H1 (cell line): ENCODE measurements at regions of chr9 and their contacts with region 1.

Region 1: GRCh38 chr9:114681594-114682332 is at the start of gene TEX48:
- DNase-seq: peak; percentile 43 to 84
- H3K4me3 ChIP-seq: no peak within 1 kb of the TSS
- H3K27ac ChIP-seq: no peak within 1 kb of the TSS
- H3K4me1 ChIP-seq: no peaks in the 10 kb centered on the region
- H3K27me3 ChIP-seq: no peaks in the 10 kb centered on the region; a peak in 2 of 7 replicates
- CTCF ChIP-seq: peak; percentile 86 to 91 (median 90)
- EP300 ChIP-seq: no peak
- POLR2A ChIP-seq: no peak
- RAD21 ChIP-seq: peak; percentile 85 to 94
- total RNA-seq, gene TEX48: not detected in 2 replicates

Region 2: GRCh38 chr9:114224247-114224610 is 457.5 kb before region 1 on chr9:
- CTCF ChIA-PET with region 1: no interaction called
- POLR2A ChIA-PET with region 1: no interaction called
- DNase-seq: no peak
- H3K4me3 ChIP-seq: no peak overlapping the region
- H3K27ac ChIP-seq: no peak overlapping the region
- H3K4me1 ChIP-seq: peaks cover 0 to 10% (median 1%) of the 10 kb centered on the region in 4 experiments; a peak in 3 of 7 replicates
- H3K27me3 ChIP-seq: no peaks in the 10 kb centered on the region
- CTCF ChIP-seq: no peak
- EP300 ChIP-seq: no peak
- POLR2A ChIP-seq: no peak
- RAD21 ChIP-seq: no peak

Region 3: DNA sequence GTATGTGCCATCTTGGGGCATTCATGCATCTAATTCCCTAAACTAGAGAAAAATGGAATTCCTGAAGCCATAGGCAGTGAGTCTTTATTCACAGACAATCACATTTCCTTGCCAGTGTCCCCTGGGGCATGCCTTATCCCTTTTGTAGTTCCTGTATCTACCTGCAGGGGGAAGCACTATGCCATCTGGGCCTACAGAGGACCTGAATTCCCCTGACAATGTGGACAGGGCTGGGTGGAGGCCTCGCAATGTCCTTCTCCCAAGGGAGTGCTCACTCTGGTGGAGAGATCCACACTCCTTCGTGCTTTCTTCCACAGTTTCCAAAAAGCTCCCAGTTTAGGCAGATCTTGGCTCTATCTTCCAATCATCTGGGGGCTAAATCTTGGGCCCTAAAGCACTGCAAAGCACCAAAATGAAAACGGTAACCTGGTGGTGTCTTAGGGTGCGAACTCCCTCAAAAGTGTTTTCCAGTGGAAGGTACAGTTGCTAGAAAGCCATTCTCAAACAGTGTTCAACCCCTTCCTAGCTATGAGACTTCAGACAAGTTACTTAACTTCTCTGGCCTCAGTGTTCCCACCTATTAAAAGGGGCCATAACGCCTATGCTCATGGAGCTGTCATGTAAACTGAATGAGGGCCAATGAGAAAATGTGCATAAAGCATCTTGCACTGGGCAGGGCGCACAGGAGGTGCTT is 194.0 kb before region 1 on chr9:
- CTCF ChIA-PET with region 1: interaction called, 10 read pairs
- POLR2A ChIA-PET with region 1: no interaction called
- DNase-seq: peak in 1 of 2 experiments; percentile 78
- H3K4me3 ChIP-seq: no peak overlapping the region
- H3K27ac ChIP-seq: no peak overlapping the region
- H3K4me1 ChIP-seq: peaks cover 0 to 3% (median 0%) of the 10 kb centered on the region in 4 experiments; a peak in 3 of 7 replicates
- H3K27me3 ChIP-seq: no peaks in the 10 kb centered on the region
- CTCF ChIP-seq: peak; percentile 70 to 86 (median 81)
- EP300 ChIP-seq: no peak
- POLR2A ChIP-seq: no peak
- RAD21 ChIP-seq: peak; percentile 83 to 86

Region 4: DNA sequence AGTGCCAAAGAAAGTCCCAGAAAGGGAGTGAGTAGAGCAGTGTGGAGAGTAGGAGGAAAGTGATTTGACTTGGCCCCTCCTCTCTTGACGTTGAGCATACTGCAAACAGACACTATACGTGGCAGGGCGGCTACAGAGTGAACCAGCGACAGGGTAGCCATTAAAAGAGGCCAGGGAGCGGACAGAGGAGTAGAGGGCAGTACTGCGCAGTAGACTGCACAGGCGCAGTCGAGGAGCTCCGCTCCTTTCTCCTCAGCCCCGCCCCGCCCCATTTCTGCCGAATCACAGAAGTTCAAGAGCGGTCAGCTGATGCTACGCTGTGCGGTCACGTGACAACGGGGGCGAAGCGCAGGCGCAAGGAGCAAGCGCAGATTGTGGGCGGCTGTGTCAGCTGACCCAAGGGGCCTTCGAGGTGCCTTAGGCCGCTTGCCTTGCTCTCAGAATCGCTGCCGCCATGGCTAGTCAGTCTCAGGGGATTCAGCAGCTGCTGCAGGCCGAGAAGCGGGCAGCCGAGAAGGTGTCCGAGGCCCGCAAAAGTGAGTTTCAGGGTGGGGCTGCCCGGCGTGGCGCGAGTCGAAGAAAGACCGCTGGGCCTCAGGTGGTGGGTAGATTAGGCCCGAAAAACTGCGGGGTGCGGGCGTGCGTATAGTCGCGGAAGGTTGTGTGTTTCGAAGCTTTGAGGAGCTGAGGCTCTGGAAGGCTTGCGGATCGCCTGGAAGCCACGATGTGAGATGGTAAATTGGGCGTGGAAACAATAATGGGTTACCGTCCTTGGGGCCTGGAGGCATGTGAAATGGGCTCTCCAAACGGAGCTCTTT is 94.2 kb before region 1 on chr9 and contains the start of gene ATP6V1G1:
- CTCF ChIA-PET with region 1: no interaction called
- POLR2A ChIA-PET with region 1: no interaction called
- DNase-seq: peak; percentile 96 to 97
- H3K4me3 ChIP-seq: peak within 1 kb of the TSS; percentile 75 to 97 (median 89)
- H3K27ac ChIP-seq: peak within 1 kb of the TSS; percentile 82
- H3K4me1 ChIP-seq: peaks cover 6 to 16% (median 7%) of the 10 kb centered on the region in 4 experiments
- H3K27me3 ChIP-seq: no peaks in the 10 kb centered on the region
- CTCF ChIP-seq: no peak
- EP300 ChIP-seq: peak; percentile 5 to 46; a peak in 2 of 3 replicates
- POLR2A ChIP-seq: peak; percentile 84 to 90
- RAD21 ChIP-seq: peak in 1 of 2 experiments; percentile 10; a peak in 1 of 4 replicates
- total RNA-seq, gene ATP6V1G1: 112 and 114 TPM in 2 replicates

Region 5: GRCh38 chr9:114603248-114603647 is 78.5 kb before region 1 on chr9:
- CTCF ChIA-PET with region 1: no interaction called
- POLR2A ChIA-PET with region 1: no interaction called
- DNase-seq: no peak
- H3K4me3 ChIP-seq: no peak overlapping the region
- H3K27ac ChIP-seq: no peak overlapping the region
- H3K4me1 ChIP-seq: no peaks in the 10 kb centered on the region
- H3K27me3 ChIP-seq: no peaks in the 10 kb centered on the region
- CTCF ChIP-seq: no peak
- EP300 ChIP-seq: no peak
- POLR2A ChIP-seq: no peak
- RAD21 ChIP-seq: no peak

Region 6: GRCh38 chr9:114709636-114710035 is 27.9 kb after region 1 on chr9:
- CTCF ChIA-PET with region 1: interaction called, 15 read pairs
- POLR2A ChIA-PET with region 1: interaction called, 3 read pairs
- DNase-seq: no peak
- H3K4me3 ChIP-seq: no peak overlapping the region
- H3K27ac ChIP-seq: no peak overlapping the region
- H3K4me1 ChIP-seq: no peaks in the 10 kb centered on the region
- H3K27me3 ChIP-seq: 0 out of 7 replicates have a peak, but pooled peaks cover 0 to 2% (median 0%) of the 10 kb centered on the region in 4 experiments
- CTCF ChIP-seq: no peak
- EP300 ChIP-seq: no peak
- POLR2A ChIP-seq: no peak
- RAD21 ChIP-seq: no peak

Region 7: GRCh38 chr9:114738581-114739316 is 57.0 kb after region 1 on chr9:
- CTCF ChIA-PET with region 1: interaction called, 33 read pairs
- POLR2A ChIA-PET with region 1: no interaction called
- DNase-seq: peak; percentile 46 to 78
- H3K4me3 ChIP-seq: no peak overlapping the region
- H3K27ac ChIP-seq: no peak overlapping the region
- H3K4me1 ChIP-seq: no peaks in the 10 kb centered on the region
- H3K27me3 ChIP-seq: no peaks in the 10 kb centered on the region
- CTCF ChIP-seq: peak; percentile 62 to 92 (median 87)
- EP300 ChIP-seq: no peak
- POLR2A ChIP-seq: no peak
- RAD21 ChIP-seq: peak; percentile 98 to 99

Region 8: DNA sequence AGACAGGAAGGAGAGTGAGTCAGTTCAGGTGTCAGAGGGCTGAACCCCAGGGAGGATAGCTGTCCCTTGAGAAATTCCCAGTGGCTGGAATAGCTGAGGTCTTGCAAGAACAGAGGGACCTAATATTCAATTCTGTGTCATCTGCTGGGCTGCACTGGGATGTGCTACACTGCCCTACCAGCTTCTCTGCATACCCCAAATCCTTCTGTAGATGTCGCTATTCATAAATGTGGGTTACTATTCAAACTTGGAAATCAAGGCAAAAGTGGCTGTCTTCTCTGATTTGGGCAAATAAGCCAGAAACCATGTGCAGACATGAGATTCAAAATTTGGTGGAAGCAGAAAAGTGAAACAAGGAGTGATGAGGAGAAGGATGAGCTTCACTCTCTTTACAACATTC is 232.4 kb after region 1 on chr9:
- CTCF ChIA-PET with region 1: interaction called, 171 read pairs
- POLR2A ChIA-PET with region 1: no interaction called
- DNase-seq: no peak
- H3K4me3 ChIP-seq: no peak overlapping the region
- H3K27ac ChIP-seq: no peak overlapping the region
- H3K4me1 ChIP-seq: no peaks in the 10 kb centered on the region
- H3K27me3 ChIP-seq: peaks cover 2 to 34% (median 19%) of the 10 kb centered on the region in 4 experiments
- CTCF ChIP-seq: peak in 2 of 3 experiments; percentile 44 to 55; a peak in 3 of 4 replicates
- EP300 ChIP-seq: no peak
- POLR2A ChIP-seq: no peak
- RAD21 ChIP-seq: peak; percentile 23 to 41; a peak in 3 of 4 replicates

Region 9: GRCh38 chr9:115013998-115014397 is 332.2 kb after region 1 on chr9:
- CTCF ChIA-PET with region 1: interaction called, 39 read pairs
- POLR2A ChIA-PET with region 1: no interaction called
- DNase-seq: peak; percentile 27 to 75
- H3K4me3 ChIP-seq: no peak overlapping the region
- H3K27ac ChIP-seq: no peak overlapping the region
- H3K4me1 ChIP-seq: no peaks in the 10 kb centered on the region
- H3K27me3 ChIP-seq: no peaks in the 10 kb centered on the region; a peak in 1 of 7 replicates
- CTCF ChIP-seq: peak; percentile 66 to 90 (median 80)
- EP300 ChIP-seq: no peak
- POLR2A ChIP-seq: no peak
- RAD21 ChIP-seq: peak; percentile 97 to 98